PC-9 (cell line): ENCODE measurements at regions of chr1 and their contacts with region 1.

Region 1: GRCh38 chr1:164602480-164603093 is 43.6 kb downstream of the PBX1 start:
- DNase-seq: peak; percentile 65 to 83
- H3K4me3 ChIP-seq: peak overlapping the region; percentile 49
- H3K27ac ChIP-seq: peak overlapping the region; percentile 95
- H3K4me1 ChIP-seq: peaks cover 69% of the 10 kb centered on the region
- H3K27me3 ChIP-seq: no peaks in the 10 kb centered on the region
- CTCF ChIP-seq: no peak

Region 2: GRCh38 chr1:164651351-164651951 is 48.9 kb after region 1 on chr1:
- CTCF ChIA-PET with region 1: no interaction called
- POLR2A ChIA-PET with region 1: no interaction called
- intact Hi-C with region 1: loop called (anchors 1 kb)
- DNase-seq: peak; percentile 72 to 92
- H3K4me3 ChIP-seq: no peak overlapping the region
- H3K27ac ChIP-seq: peak overlapping the region; percentile 98
- H3K4me1 ChIP-seq: peaks cover 78% of the 10 kb centered on the region
- H3K27me3 ChIP-seq: no peaks in the 10 kb centered on the region
- CTCF ChIP-seq: no peak

Region 3: GRCh38 chr1:164689672-164690598 is 87.3 kb after region 1 on chr1:
- CTCF ChIA-PET with region 1: no interaction called
- POLR2A ChIA-PET with region 1: interaction called, 18 read pairs
- intact Hi-C with region 1: no loop called
- DNase-seq: no peak
- H3K4me3 ChIP-seq: no peak overlapping the region
- H3K27ac ChIP-seq: no peak overlapping the region
- H3K4me1 ChIP-seq: peaks cover 9% of the 10 kb centered on the region
- H3K27me3 ChIP-seq: no peaks in the 10 kb centered on the region
- CTCF ChIP-seq: no peak

Region 4: GRCh38 chr1:164772635-164773034 is 170.0 kb after region 1 on chr1:
- CTCF ChIA-PET with region 1: interaction called, 4 read pairs
- POLR2A ChIA-PET with region 1: no interaction called
- intact Hi-C with region 1: loop called (anchors 1 kb)
- DNase-seq: peak; percentile 84 to 96
- H3K4me3 ChIP-seq: peak overlapping the region; percentile 25; the same call in 1 of the 2 replicates
- H3K27ac ChIP-seq: peak overlapping the region; percentile 98
- H3K4me1 ChIP-seq: peaks cover 80% of the 10 kb centered on the region
- H3K27me3 ChIP-seq: no peaks in the 10 kb centered on the region
- CTCF ChIP-seq: no peak

Region 5: GRCh38 chr1:165162671-165163241 is 560.2 kb after region 1 on chr1:
- CTCF ChIA-PET with region 1: no interaction called
- POLR2A ChIA-PET with region 1: no interaction called
- intact Hi-C with region 1: loop called (anchors 10 kb)
- DNase-seq: peak; percentile 84 to 94
- H3K4me3 ChIP-seq: peak overlapping the region; percentile 25; the same call in 1 of the 2 replicates
- H3K27ac ChIP-seq: peak overlapping the region; percentile 81
- H3K4me1 ChIP-seq: peaks cover 69% of the 10 kb centered on the region
- H3K27me3 ChIP-seq: no peaks in the 10 kb centered on the region
- CTCF ChIP-seq: no peak